ENCODE measurements at regions of chr7 and their contacts with region 1.

Region 1: GRCh38 chr7:104848138-104848990 is 165.6 kb upstream of the KMT2E start:
- DNase-seq: peak; percentile 26 to 70
- ATAC-seq: peak in 2 of 3 donors; percentile 58 to 67
- H3K4me3 ChIP-seq: no peak overlapping the region
- H3K4me3 Mint-ChIP-seq: no peak overlapping the region
- H3K27ac ChIP-seq: no peak overlapping the region
- H3K27ac Mint-ChIP-seq: no peak overlapping the region
- H3K4me1 ChIP-seq: no peaks in the 10 kb centered on the region
- H3K4me1 Mint-ChIP-seq: no peaks in the 10 kb centered on the region
- H3K27me3 ChIP-seq: no peaks in the 10 kb centered on the region
- H3K27me3 Mint-ChIP-seq: peaks cover 11 to 23% of the 10 kb centered on the region in 2 donors
- CTCF ChIP-seq: peak; percentile 73

Region 2: DNA sequence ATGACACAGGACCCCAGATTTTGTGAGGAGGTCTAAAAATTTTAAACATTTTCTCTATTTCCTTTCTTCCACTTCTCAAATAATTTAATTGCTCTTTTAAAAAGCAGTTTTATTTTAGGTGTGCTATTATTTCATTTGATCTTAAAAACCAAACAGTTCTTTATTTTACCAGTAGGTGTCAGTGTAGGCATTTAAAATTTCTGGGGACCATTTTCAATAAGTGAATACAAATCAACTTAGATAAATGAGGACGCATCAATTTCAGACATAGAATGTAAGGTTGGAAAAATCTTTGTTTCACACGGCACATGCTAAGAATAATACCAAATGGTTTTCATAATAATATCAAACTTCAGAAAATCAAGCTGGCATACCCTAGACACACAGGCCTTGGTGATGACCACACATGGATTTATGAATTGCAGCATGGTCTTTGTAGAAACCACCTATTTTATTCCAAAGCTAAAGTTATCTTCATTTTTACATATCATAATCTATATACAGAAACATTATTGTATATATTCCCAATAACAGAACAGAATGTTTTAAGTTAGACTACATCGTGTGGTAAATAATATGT is 1274.8 kb before region 1 on chr7:
- intact Hi-C with region 1: loop called (anchors 5 kb)
- DNase-seq: peak in 1 of 2 donors; percentile 52
- ATAC-seq: no peak
- H3K4me3 ChIP-seq: no peak overlapping the region
- H3K4me3 Mint-ChIP-seq: no peak overlapping the region
- H3K27ac ChIP-seq: no peak overlapping the region
- H3K27ac Mint-ChIP-seq: no peak overlapping the region
- H3K4me1 ChIP-seq: no peaks in the 10 kb centered on the region
- H3K4me1 Mint-ChIP-seq: no peaks in the 10 kb centered on the region
- H3K27me3 ChIP-seq: no peaks in the 10 kb centered on the region
- H3K27me3 Mint-ChIP-seq: peaks cover 3 to 6% of the 10 kb centered on the region in 2 donors
- CTCF ChIP-seq: peak; percentile 57

Region 3: DNA sequence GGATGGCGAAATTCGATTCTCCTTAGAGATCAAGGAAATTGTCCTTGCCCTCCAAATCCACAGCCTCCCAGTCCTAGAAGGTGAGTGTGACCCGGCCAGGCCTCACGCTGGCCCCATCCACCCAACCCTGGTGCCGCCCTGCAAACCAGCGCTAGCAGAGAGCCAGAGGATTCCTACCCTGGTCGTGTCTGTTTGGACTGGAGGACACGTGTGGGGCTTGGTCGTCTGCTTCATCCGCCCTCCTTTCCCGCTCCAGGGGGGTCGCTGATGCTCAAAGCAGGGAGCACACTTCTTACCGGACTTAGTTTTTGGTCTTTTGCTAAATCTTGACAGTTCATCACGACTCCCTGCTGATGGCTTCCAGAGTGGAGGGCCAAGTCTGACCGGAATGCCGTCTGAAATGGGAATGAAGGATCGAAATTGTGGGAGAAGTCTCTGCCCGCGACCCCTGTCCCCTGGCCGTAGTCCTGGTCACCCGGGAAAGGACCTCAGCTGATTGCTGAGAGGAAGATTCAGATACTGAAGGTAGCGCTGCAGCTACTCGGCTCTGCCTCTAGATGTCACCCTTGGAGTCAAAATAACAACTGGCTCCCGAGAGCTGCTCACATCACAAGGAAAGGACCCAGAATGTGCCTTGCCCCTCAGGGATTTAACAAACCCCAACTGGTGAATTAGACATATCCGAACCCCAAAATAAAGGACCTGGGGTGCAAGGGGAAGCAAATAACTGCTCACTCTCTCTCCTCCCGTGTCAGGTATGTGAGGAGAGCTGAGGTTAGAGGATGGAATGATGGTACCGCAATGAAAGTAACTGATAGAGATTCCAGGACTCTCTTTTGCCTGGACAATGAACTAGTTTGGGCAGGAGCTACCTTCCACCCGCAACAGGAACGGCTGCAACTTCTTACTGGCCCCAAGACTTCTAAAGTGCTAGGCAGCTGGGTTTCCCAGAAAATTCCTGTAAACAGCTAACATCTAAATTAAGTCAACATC is 617.0 kb before region 1 on chr7:
- intact Hi-C with region 1: loop called (anchors 1 kb)
- DNase-seq: peak; percentile 18 to 66
- ATAC-seq: peak; percentile 76 to 91 (median 79)
- H3K4me3 ChIP-seq: no peak overlapping the region
- H3K4me3 Mint-ChIP-seq: no peak overlapping the region
- H3K27ac ChIP-seq: no peak overlapping the region
- H3K27ac Mint-ChIP-seq: no peak overlapping the region
- H3K4me1 ChIP-seq: peaks cover 5% of the 10 kb centered on the region
- H3K4me1 Mint-ChIP-seq: no peaks in the 10 kb centered on the region
- H3K27me3 ChIP-seq: no peaks in the 10 kb centered on the region
- H3K27me3 Mint-ChIP-seq: peaks cover 21 to 24% of the 10 kb centered on the region in 2 donors
- CTCF ChIP-seq: peak; percentile 82

Measured in natural killer cell (primary cell).